Activated B cell treated with CpG ODN at 0.5 μM for 24 hours (primary cell): ENCODE measurements at regions of chr19 and their contacts with region 1.

Region 1: DNA sequence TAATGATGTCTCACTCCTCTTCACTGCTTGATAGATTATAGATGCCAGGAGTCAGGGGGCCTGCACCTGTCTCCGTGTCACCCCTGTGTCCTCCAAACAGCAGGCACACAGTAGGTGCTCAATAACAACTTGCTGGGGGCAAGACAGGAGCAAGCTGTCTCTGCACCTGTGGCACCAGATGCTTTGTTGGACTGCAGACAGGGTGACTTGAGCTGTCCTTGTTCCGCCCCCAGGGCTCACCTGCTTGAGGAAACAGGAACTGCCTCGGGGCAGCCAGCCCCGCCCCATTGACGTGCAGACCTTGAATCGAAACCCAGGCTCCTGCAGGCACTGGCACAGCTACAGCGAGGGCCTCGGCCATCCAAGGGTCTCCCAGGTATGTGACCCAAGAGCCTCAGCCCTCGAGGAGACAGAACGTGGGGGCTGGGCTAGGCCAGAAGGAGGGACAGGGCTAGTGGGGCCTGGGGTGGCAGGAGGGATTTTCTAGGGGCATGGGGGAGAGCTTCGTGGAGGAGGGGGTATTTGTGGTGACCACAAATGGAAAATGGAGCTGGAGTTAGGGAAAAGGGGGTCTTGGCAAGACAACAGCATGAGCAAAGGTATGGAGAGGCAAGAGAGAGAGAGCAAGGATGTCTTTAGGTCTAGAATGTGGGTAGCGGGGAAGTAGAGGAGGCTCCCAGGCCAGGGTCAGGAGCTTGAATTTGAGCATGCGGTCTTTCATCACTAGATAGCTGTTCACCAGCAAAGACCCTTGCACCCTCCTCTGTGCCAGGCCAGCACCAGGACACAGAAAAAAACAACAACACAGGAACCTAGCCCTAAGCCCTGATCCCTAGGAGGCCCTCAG is at the start of gene HSH2D:
- DNase-seq: peak; percentile 82
- ATAC-seq: peak; percentile 71
- H3K4me3 Mint-ChIP-seq: peak within 1 kb of the TSS; percentile 97
- H3K27ac Mint-ChIP-seq: peak within 1 kb of the TSS; percentile 99
- H3K4me1 Mint-ChIP-seq: peaks cover 94% of the 10 kb centered on the region
- H3K27me3 Mint-ChIP-seq: no peaks in the 10 kb centered on the region
- CTCF ChIP-seq: no peak
- total RNA-seq, gene HSH2D: 172 and 191 TPM in 2 replicates

Region 2: DNA sequence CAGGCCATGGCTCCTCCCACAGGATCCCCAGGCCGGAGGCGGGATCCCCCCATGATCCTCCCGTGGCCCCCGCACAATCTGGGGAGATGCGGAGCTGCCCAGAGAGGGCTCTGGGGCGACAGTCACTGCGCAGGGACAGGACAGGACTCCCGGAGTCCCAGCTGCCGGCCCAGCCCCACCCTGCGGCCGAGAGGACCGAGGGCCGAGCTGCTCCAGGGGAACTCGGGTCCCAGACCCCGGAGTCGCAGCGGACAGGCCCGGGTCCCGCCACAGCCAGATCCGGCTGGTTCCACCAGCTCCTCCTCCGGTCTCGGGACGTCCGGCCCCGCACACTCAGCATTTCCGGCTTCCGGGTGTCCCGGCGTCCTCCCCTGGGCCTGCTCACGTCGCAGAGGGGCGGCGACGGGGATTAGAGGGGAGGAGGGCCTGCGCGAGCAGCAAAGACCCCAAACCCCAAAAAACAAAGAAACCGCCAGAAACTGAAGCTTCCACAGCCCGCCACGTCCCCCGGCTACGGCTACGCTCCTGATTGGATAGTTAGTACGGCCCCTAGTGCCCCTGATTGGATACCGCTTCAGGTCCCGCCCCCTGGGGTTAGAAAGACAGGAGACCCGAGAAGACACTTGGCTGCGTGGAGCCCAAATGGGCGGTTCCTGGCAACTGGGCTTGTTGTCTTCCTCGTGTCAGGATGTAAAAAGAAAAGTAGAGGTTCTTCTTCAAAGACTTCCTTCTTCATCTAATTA is 306.9 kb before region 1 on chr19:
- CTCF ChIA-PET with region 1: no interaction called
- POLR2A ChIA-PET with region 1: interaction called, 11 read pairs
- intact Hi-C with region 1: no loop called
- DNase-seq: peak; percentile 85
- ATAC-seq: peak; percentile 95
- H3K4me3 Mint-ChIP-seq: peak overlapping the region; percentile 92
- H3K27ac Mint-ChIP-seq: peak overlapping the region; percentile 95
- H3K4me1 Mint-ChIP-seq: peaks cover 15% of the 10 kb centered on the region
- H3K27me3 Mint-ChIP-seq: peaks cover 4% of the 10 kb centered on the region
- CTCF ChIP-seq: no peak

Region 3: GRCh38 chr19:16070366-16070990 is 73.1 kb before region 1 on chr19:
- CTCF ChIA-PET with region 1: interaction called, 4 read pairs
- POLR2A ChIA-PET with region 1: interaction called, 110 read pairs
- intact Hi-C with region 1: loop called (anchors 1 kb)
- DNase-seq: peak; percentile 64
- ATAC-seq: peak; percentile 93
- H3K4me3 Mint-ChIP-seq: peak overlapping the region; percentile 67
- H3K27ac Mint-ChIP-seq: no peak overlapping the region
- H3K4me1 Mint-ChIP-seq: peaks cover 16% of the 10 kb centered on the region
- H3K27me3 Mint-ChIP-seq: no peaks in the 10 kb centered on the region
- CTCF ChIP-seq: no peak

Region 4: GRCh38 chr19:16111160-16111908 is 32.3 kb before region 1 on chr19 and contains the start of gene RAB8A:
- CTCF ChIA-PET with region 1: interaction called, 8 read pairs
- POLR2A ChIA-PET with region 1: interaction called, 338 read pairs
- intact Hi-C with region 1: loop called (anchors 1 kb)
- DNase-seq: peak; percentile 100
- ATAC-seq: peak; percentile 90
- H3K4me3 Mint-ChIP-seq: peak within 1 kb of the TSS; percentile 99
- H3K27ac Mint-ChIP-seq: peak within 1 kb of the TSS; percentile 97
- H3K4me1 Mint-ChIP-seq: peaks cover 46% of the 10 kb centered on the region
- H3K27me3 Mint-ChIP-seq: no peaks in the 10 kb centered on the region
- CTCF ChIP-seq: peak; percentile 73
- total RNA-seq, gene RAB8A: 157 and 171 TPM in 2 replicates

Region 5: GRCh38 chr19:16160943-16161560 is 17.4 kb after region 1 on chr19:
- CTCF ChIA-PET with region 1: no interaction called
- POLR2A ChIA-PET with region 1: interaction called, 154 read pairs
- intact Hi-C with region 1: loop called (anchors 2 kb)
- DNase-seq: no peak
- ATAC-seq: peak; percentile 15
- H3K4me3 Mint-ChIP-seq: no peak overlapping the region
- H3K27ac Mint-ChIP-seq: no peak overlapping the region
- H3K4me1 Mint-ChIP-seq: peaks cover 10% of the 10 kb centered on the region
- H3K27me3 Mint-ChIP-seq: no peaks in the 10 kb centered on the region
- CTCF ChIP-seq: no peak

Region 6: DNA sequence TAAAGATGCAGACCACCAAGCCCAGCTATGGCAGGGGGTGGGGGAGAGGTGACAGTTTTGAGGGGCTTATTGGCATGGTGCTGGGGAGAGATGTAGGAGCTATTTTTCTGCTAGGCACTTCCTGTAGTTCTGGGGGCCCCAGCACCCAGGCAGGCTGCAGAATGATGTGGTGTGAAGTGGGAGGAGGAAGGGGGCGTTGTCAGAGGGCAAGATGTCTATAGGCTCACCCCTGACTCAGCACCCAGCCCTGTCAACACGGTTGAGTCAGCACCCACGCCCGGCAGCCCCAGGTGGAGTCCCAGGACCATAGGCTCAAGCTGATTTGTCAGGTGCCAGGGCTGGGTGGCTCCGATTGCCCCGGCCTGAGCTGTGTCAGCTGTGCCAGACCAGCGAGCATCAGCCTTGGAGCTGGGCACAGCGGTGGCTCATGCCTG is 186.8 kb after region 1 on chr19:
- CTCF ChIA-PET with region 1: no interaction called
- POLR2A ChIA-PET with region 1: interaction called, 17 read pairs
- intact Hi-C with region 1: no loop called
- DNase-seq: peak; percentile 70
- ATAC-seq: peak; percentile 77
- H3K4me3 Mint-ChIP-seq: peak overlapping the region; percentile 42
- H3K27ac Mint-ChIP-seq: peak overlapping the region; percentile 94
- H3K4me1 Mint-ChIP-seq: peaks cover 63% of the 10 kb centered on the region
- H3K27me3 Mint-ChIP-seq: no peaks in the 10 kb centered on the region
- CTCF ChIP-seq: no peak

Region 7: DNA sequence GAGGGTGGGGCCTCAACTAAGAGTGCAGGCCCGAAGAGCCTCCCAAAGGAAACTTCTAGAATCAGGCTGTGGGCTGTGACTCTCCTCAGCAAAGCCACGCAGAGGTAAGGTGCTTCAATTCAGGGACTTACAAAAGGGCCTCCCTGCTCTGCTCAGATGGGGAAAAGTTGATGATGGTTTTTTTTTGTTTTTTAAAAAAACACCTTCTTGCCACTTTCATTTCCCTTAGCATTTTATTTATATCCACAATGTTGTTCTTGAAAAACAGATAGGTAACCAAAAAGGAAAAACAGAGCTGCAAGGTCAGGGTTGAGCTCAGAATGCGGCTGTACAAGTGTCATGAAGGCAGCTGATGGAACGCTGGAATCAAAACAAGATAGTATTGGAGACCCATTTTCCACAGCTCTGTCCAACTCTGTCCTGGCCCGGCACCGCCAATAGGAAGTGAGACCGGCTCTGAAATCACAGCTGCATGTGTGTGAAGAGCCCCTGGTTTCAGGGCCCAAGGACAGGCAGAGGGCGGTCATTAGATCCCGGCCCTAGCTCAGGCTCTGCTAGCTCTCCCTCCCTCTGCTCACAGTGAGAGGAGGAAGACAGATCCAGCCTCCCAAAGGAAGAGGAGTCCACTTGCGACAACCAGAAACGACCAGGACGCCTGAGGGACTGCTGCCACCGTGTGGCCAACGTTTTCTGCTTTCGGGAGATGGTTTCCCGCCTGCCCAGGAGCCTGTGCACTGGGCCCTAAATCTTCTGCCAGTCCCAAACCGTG is 239.3 kb after region 1 on chr19:
- CTCF ChIA-PET with region 1: no interaction called
- POLR2A ChIA-PET with region 1: interaction called, 11 read pairs
- intact Hi-C with region 1: no loop called
- DNase-seq: peak; percentile 63
- ATAC-seq: peak; percentile 59
- H3K4me3 Mint-ChIP-seq: peak overlapping the region; percentile 57
- H3K27ac Mint-ChIP-seq: peak overlapping the region; percentile 94
- H3K4me1 Mint-ChIP-seq: peaks cover 82% of the 10 kb centered on the region
- H3K27me3 Mint-ChIP-seq: no peaks in the 10 kb centered on the region
- CTCF ChIP-seq: no peak

Region 8: DNA sequence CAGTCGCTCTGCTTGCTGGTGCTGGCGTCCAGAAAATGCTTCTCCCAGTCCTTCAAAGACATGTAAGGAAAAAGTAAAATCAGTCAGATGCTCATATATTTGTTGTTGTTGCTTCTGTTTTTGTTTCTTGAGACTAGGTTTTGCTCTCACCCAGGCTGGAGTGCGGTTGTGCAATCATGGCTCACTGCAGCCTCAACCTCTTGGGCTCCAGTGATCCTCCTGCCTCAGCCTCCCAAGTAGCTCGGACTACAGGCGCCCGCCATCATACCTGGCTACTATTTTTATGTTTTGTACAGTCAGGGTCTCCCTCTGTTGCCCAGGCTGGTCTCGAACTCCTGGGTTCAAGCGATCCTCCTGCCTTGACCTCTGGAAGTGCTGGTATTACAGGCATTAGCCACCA is 339.1 kb after region 1 on chr19:
- CTCF ChIA-PET with region 1: no interaction called
- POLR2A ChIA-PET with region 1: no interaction called
- intact Hi-C with region 1: no loop called
- DNase-seq: no peak
- ATAC-seq: no peak
- H3K4me3 Mint-ChIP-seq: no peak overlapping the region
- H3K27ac Mint-ChIP-seq: no peak overlapping the region
- H3K4me1 Mint-ChIP-seq: no peaks in the 10 kb centered on the region
- H3K27me3 Mint-ChIP-seq: no peaks in the 10 kb centered on the region
- CTCF ChIP-seq: no peak